AG04450 (cell line): ENCODE measurements at regions of chr5 and their contacts with region 1.

Region 1: DNA sequence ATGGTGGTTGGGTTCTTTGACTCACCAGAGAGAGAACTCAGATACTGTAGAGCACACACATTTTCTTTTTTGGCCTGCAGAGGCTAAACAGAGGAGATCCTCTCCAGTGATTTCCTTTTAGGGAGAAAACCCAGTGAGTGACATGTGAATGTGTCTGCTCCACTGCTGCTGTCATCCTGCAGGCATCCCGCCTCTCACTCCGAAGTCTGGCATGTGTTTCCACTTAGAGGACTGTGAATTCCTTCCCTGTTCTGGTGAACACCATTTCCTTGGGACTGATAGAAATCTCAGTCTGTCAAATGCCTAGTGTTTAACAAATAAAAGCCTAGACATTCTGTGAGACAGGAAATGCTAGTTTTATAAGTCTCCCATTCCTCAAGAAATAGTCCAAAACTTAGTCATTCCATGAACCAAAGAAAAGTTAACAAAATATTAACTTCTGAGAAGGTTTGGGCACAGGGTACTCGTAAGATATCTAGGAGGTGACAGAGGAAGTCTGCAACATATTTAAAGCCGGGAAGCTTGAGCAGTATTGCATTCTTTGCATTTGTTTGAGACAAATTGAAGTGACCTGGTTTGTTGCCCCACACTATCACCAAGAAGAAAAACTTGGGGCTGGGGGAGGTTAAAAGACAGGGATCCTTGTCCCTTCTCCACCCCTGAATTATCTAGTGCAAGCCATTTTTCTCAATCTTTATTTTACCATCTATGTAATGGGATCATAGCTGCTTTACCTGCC is 74.9 kb upstream of the NIPAL4 start:
- DNase-seq: peak; percentile 97
- H3K4me3 ChIP-seq: no peak overlapping the region; the same call in 1 of the 2 replicates
- H3K27ac ChIP-seq: peak overlapping the region; percentile 95
- H3K27me3 ChIP-seq: no peaks in the 10 kb centered on the region
- CTCF ChIP-seq: no peak

Region 2: DNA sequence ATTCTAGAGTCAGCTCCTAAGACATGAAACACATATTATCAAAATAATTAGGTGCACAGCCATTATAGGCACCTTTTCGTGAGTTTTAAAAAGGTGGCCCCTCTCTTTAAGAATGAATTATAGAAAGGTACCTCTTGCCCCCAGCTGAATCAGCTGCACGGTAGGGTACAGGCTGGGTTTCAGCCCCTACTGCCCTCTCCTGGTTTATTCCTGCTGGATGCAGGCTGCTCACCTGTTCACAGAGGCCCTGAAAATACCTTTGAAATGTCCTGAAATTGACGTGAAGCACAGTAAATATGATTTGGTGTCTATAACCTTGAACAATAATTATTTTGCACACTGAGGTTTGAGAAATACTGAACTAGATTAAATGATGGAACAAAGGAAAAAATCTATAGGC is 1563.0 kb before region 1 on chr5:
- CTCF ChIA-PET with region 1: no interaction called
- POLR2A ChIA-PET with region 1: no interaction called
- DNase-seq: no peak
- H3K4me3 ChIP-seq: no peak overlapping the region
- H3K27ac ChIP-seq: no peak overlapping the region
- H3K27me3 ChIP-seq: no peaks in the 10 kb centered on the region
- CTCF ChIP-seq: no peak

Region 3: GRCh38 chr5:157366741-157367674 is 18.1 kb before region 1 on chr5:
- CTCF ChIA-PET with region 1: interaction called, 5 read pairs
- POLR2A ChIA-PET with region 1: interaction called, 15 read pairs
- DNase-seq: peak; percentile 54
- H3K4me3 ChIP-seq: no peak overlapping the region
- H3K27ac ChIP-seq: no peak overlapping the region
- H3K27me3 ChIP-seq: no peaks in the 10 kb centered on the region
- CTCF ChIP-seq: peak; percentile 82

Region 4: DNA sequence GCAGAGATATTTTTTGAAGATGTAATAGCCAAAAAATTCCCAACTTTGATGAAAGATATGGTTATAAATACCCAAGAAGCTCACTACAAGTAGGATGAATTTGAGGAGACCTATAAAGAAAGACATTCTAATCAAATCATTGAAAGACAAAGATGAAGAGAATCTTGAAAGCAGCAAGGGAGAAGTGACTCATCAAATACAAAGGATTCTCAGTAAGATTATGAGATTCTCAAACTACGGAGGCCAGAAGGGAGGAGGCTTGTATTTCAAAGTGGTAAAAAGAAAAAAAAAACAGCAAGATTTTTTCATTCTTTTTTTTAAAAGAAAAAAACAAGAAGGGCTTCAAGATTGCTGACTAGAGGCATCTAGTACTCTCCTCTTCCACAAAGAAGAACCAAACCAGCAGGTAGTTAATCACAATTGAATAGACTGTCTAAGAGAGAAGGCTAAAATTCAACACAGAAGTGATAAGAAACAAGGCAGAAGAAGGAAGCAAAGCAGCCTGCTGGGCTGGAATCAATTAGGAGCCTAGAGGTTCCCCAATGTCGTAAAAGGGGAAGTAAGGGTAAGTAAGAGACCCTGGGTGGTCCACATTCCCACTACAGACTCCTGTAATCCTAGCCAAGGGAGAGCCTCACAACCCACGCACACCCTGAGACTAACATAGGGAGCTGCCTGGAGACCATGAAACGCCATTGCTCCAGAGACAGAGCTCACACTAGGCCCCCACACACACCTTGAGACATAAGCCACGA is 15.8 kb after region 1 on chr5:
- CTCF ChIA-PET with region 1: no interaction called
- POLR2A ChIA-PET with region 1: no interaction called
- DNase-seq: no peak
- H3K4me3 ChIP-seq: no peak overlapping the region
- H3K27ac ChIP-seq: no peak overlapping the region
- H3K27me3 ChIP-seq: no peaks in the 10 kb centered on the region
- CTCF ChIP-seq: no peak